ENCODE measurements at regions of chr5 and their contacts with region 1.

Region 1: DNA sequence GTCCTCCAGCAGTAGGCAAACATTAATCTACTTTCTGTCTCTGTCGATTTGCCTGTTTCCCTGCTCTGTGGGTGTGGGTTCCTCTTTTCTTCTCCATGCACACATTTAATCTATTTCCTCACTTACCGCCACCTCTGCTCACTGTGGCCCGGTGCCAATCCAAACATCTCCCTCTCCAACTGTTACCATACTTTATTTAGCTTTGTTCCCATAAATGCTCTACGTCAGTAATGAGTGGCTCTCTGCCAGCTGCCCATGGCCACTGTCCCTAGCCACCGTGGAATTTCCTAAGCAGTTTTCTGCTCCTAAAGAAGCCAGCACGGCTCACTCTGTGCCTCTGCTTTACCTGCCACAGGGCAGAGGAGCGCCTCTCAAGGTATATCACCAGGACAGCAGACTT is 19.5 kb upstream of the GOLPH3 start:
- DNase-seq: peak; percentile 98
- H3K4me3 ChIP-seq: peak overlapping the region in 1 of 3 experiments; percentile 9
- H3K27ac ChIP-seq: peak overlapping the region; percentile 24
- H3K4me1 ChIP-seq: peaks cover 8% of the 10 kb centered on the region
- H3K27me3 ChIP-seq: peaks cover 0 to 5% of the 10 kb centered on the region in 2 experiments
- CTCF ChIP-seq: no peak
- POLR2A ChIP-seq: no peak

Region 2: DNA sequence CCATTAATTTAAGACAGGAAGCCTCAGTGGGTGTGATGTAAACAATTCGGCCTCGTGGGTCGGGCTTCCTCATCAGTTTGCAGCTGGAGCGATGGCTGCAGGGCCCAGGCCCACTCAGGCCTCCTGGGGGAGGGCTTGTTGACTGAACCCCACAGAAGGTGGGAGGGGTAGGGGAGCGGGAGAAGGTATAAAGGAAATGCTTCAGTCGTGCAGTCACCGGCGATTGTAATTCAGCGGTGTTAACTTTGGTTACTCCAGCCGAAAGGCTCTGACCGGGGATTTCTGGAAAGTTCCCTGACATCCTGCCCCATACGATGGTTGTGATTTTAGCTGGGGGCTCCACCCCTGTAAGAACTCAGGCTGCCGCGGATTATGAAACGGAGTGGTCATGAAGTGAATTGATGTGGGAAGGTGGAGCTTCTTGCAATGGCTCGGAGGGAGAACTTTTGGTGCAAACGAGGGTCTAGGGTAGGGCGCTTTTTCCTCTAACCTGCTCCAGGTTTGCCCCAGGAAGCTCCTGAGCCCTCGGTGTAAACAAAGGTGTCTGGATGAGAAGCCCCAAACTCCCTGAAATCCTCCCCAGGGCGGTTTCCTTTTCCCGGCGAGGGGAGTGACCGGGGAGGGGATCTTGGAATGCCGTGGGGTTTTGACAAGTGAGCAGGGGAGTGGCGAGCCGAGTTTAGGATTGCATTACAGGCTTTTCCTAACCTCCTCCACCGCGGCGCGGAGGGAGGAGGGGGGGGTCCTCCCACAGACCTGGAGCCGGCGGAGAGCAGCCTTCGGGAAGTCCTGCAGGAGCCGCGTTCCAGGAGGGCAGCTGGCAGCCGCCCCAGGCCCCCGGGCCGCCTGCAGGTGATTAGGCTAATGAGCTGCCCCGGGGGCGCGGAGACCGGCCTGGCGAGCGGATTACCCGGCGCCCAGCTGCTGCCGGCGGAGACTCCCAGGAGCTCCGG is 339.1 kb before region 1 on chr5:
- CTCF ChIA-PET with region 1: no interaction called
- POLR2A ChIA-PET with region 1: no interaction called
- dilution Hi-C with region 1: no loop called
- intact Hi-C with region 1: loop called (anchors 10 kb)
- DNase-seq: peak; percentile 40
- H3K4me3 ChIP-seq: peak overlapping the region; percentile 10 to 68 (median 36)
- H3K27ac ChIP-seq: peak overlapping the region; percentile 4
- H3K4me1 ChIP-seq: peaks cover 17% of the 10 kb centered on the region
- H3K27me3 ChIP-seq: peaks cover 0 to 2% of the 10 kb centered on the region in 2 experiments
- CTCF ChIP-seq: peak in 1 of 2 donors; percentile 5
- POLR2A ChIP-seq: no peak

Region 3: DNA sequence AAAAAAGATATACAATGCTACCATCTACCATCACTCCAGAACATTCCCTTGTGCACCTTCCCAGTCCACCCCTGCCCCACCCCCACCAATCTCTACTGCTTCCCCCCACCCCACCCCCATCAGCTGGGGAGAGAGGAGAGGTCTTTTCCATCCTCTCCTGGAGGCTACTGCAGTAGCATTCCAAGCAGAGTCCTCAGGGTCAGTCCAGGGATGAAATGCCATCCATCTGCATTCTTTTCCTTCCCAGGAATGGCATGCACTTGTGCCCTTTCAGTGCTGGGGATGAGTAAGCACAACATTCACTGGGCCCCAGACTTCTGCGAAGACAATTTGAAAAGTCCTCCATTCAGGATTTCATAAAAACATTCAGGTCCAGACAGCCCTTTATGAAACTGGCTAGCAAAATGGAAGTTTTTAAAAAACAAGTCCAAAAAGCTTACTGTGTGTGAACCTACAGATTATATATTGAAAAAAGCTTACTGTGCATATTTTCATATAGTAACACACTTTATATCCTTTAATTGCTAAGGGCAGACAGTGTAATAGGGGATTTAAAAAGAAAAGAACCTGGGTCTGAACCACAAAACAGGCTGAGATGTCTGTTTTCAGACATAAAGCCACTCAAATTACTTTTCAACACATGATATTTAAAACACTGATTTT is 30.5 kb after region 1 on chr5:
- CTCF ChIA-PET with region 1: interaction called, 3 read pairs
- POLR2A ChIA-PET with region 1: no interaction called
- dilution Hi-C with region 1: no loop called
- intact Hi-C with region 1: loop called (anchors 2 kb)
- DNase-seq: no peak
- H3K4me3 ChIP-seq: no peak overlapping the region
- H3K27ac ChIP-seq: no peak overlapping the region
- H3K4me1 ChIP-seq: no peaks in the 10 kb centered on the region
- H3K27me3 ChIP-seq: no peaks in the 10 kb centered on the region
- CTCF ChIP-seq: no peak
- POLR2A ChIP-seq: no peak

Region 4: GRCh38 chr5:32339198-32339597 is 145.6 kb after region 1 on chr5:
- CTCF ChIA-PET with region 1: no interaction called
- POLR2A ChIA-PET with region 1: no interaction called
- dilution Hi-C with region 1: no loop called
- intact Hi-C with region 1: no loop called
- DNase-seq: no peak
- H3K4me3 ChIP-seq: no peak overlapping the region
- H3K27ac ChIP-seq: no peak overlapping the region
- H3K4me1 ChIP-seq: no peaks in the 10 kb centered on the region
- H3K27me3 ChIP-seq: no peaks in the 10 kb centered on the region
- CTCF ChIP-seq: no peak
- POLR2A ChIP-seq: no peak

Region 5: DNA sequence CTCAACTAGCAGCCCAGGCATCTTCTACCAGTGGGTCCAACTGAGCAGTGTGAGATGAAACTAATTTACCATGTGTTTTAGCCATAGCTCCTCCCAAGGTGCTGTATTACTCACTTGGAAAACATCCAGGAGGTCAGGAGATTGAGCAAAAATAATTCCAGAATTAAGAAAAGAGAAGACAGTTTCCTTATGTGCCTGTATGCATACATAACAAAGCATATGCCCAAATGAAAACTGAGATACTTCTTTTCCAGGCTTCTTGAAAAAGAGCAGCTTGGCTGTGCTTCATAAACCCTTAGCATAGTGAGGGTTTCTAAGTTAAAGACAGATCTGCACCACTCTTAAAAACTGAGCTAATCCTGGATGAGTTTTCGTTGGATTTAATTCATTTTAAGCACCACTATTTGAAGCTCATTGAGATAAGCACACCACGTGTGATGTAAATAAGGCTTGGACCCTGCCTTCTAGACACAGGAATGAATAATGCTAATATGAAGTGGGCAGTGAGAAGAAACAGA is 1578.8 kb after region 1 on chr5:
- CTCF ChIA-PET with region 1: no interaction called
- POLR2A ChIA-PET with region 1: no interaction called
- dilution Hi-C with region 1: no loop called
- intact Hi-C with region 1: no loop called
- DNase-seq: no peak
- H3K4me3 ChIP-seq: no peak overlapping the region
- H3K27ac ChIP-seq: no peak overlapping the region
- H3K4me1 ChIP-seq: no peaks in the 10 kb centered on the region
- H3K27me3 ChIP-seq: no peaks in the 10 kb centered on the region
- CTCF ChIP-seq: no peak
- POLR2A ChIP-seq: no peak

Measured in endothelial cell of umbilical vein (primary cell).